GM10248 (cell line): ENCODE measurements at regions of chr1 and their contacts with region 1.

Region 1: DNA sequence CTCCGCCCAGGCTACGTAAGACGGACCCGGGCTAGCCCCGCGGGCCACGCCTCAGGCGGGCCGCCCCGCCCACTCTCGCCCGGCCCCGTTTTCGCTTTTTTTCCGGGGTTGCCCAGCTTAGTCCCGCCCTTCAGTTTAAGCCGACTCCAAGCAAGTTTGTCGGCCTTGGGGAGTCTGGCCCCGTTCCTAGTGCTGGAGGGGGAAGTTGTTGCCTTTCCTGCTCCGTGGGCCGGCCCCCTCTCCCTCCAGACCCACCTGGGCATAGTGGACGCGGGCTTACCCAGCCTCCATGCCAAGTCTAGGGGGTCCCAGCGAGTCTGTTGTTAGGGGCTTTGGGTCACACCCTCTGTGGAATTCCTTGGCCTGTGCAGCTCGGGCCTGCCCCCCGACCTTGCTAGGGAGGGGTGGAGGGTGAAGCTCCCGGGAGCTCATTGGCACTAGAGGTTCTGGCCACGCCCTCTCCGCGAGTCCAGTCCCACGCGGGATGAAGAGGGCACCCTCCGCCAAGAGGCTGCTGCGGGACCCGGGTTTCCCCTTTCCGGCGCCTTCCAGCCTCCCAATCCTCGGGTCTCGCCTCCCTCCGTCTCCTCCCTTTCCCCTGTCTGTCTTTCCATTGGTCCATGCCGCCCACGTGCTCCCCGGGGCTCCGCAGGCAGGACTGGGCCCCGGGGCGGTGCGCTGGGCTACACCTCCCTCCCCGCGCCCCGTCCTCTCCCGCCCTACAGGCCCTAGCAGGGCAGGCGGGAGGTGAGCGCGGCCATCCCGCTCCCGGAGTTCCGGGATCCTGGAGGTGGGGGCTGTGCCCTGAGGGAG is 3.3 kb downstream of the RUSC1 start:
- DNase-seq: peak; percentile 95
- CTCF ChIP-seq: no peak

Region 2: GRCh38 chr1:155244368-155245162 is 79.4 kb before region 1 on chr1:
- CTCF ChIA-PET with region 1: interaction called, 150 read pairs
- POLR2A ChIA-PET with region 1: no interaction called
- DNase-seq: peak; percentile 94
- CTCF ChIP-seq: peak; percentile 51

Region 3: GRCh38 chr1:155277070-155277895 is 46.7 kb before region 1 on chr1 and contains the start of gene HCN3:
- CTCF ChIA-PET with region 1: interaction called, 13 read pairs
- POLR2A ChIA-PET with region 1: interaction called, 3 read pairs
- DNase-seq: peak; percentile 98
- CTCF ChIP-seq: peak; percentile 52

Region 4: DNA sequence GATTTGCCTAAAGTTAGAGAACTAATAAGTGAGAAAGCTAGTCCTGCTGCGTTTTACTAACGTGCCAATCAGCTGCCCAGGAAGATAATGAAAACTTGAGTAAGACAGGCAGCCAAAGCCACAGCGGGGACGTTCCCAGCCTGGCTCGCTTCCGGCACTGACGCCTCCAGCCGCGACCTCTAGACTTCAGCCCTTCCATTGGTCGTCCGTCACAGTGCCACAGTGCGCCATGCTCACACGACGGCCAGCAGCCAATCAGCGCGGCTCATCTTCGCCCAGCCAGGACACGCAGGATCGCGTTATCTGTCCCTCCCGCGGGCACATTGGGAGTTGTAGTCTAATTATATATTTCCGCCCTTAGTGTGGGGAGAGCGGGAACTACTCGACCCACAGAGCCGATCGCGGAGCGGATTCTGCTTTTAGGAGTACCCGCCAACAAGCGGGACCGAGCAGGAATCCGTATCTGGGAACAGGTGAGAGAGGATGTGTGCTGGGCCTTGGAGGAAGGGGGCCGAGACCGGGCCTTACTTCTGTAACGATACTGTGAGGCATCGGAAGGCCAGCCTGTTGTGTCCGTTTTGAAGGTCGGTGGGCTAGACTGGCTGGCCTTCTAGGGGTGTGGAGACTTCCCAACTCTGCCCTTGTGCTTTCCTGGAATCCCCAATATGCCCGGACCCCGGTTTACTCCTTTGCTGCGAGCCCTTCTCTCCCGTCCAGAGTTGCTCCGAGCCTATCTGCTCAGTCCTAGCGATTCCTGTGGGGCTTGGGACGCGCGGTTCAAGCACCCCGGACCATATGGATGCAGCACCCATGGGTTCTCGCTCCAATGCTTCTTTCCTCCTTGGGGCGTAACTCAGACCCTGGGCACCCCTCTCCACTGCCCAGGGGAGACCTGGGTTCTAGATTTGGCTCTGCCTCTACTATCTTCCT is 15.2 kb before region 1 on chr1 and contains the start of gene FDPS:
- CTCF ChIA-PET with region 1: interaction called, 26 read pairs
- POLR2A ChIA-PET with region 1: interaction called, 9 read pairs
- DNase-seq: peak; percentile 98
- CTCF ChIP-seq: no peak

Region 5: DNA sequence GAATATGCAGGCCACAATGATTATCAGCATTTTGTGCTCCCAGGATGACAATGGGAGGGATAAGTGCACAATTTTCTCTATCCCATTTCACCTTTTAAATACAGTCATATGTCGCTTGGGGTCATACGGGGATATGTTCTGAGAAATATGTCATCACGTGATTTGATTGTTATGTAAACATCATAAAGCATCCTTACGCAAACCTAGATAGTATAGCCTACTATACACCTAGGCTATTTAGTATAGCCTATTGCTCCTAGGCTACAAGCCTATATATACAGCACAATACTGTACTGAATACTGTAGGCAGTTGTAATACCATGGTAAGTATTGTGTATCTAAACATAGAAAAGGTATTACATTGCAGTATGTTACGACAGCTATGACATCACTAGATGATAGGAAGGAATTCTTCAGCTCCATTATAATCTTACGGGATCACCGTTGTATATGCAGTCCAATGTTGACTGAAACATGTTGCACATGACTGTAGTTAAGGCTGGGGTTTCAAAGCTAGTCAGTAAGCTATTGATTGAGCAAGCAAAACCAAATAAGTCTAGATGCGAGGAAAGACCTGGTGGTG is 15.6 kb after region 1 on chr1:
- CTCF ChIA-PET with region 1: interaction called, 11 read pairs
- POLR2A ChIA-PET with region 1: no interaction called
- DNase-seq: no peak
- CTCF ChIP-seq: no peak